A673 (cell line): ENCODE measurements at regions of chr3 and their contacts with region 1.

Region 1: GRCh38 chr3:105518806-105519418 is 152.2 kb downstream of the ALCAM start:
- DNase-seq: peak; percentile 83
- H3K4me3 ChIP-seq: no peak overlapping the region
- H3K27ac ChIP-seq: no peak overlapping the region
- H3K4me1 ChIP-seq: no peaks in the 10 kb centered on the region
- H3K27me3 ChIP-seq: no peaks in the 10 kb centered on the region
- CTCF ChIP-seq: peak; percentile 68

Region 2: DNA sequence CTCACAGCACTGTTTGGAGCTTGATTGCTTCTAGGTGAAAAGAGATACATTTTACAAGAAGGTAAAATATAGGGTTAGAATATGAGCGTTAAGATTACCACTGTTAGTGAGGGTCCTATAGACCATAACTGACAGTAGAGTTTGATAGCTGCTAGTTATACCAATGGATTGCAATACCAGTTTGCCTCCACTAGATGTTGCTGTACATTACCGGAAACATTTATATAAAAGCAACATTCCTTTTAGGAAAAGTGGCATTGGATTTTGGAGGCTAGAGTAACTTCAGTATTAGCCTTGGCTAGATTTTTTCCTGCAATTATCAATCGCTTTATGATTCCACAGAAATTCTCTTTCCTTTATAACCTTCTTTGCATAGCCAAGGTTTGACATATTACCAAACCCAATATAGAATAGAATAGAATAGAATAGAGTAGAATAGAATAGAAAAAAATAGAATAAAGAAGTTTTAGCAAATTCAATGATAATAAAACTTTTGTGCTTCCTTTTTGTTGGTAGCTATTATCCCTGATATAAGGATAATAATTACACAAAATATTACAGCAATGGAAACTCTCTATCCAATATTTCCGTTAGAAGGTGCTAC is 1245.8 kb before region 1 on chr3:
- CTCF ChIA-PET with region 1: no interaction called
- POLR2A ChIA-PET with region 1: no interaction called
- intact Hi-C with region 1: loop called (anchors 5 kb)
- DNase-seq: peak; percentile 57
- H3K4me3 ChIP-seq: no peak overlapping the region
- H3K27ac ChIP-seq: no peak overlapping the region
- H3K4me1 ChIP-seq: no peaks in the 10 kb centered on the region
- H3K27me3 ChIP-seq: no peaks in the 10 kb centered on the region
- CTCF ChIP-seq: peak; percentile 81

Region 3: DNA sequence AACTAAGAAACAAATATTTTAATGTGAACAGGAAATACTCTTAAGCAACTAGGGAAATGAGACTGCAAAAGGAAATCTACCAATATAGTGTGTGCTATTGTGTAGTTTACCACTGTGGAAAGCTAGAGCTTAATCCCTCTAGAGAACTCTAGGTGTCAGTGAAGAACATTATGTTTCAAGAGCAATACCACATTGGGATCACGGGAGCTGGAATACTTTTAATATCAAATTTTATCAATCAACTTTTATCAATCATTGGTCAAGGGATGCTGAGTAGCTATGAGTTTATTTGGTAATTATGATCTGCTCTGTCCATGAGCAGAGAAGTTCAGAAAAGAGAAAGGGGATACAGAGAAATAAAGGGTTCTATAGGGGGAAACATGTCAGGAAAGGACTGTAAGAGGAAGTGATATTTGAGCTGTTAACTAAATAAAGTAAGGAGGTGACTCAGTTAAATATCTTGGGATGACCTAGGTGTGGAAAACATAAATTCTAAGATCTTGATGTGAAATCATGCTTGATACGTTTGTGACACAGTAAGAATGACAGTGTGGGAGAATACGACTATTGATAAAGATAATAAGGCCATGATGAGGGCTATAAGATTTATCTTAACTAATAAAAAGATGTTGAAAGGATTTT is 914.4 kb before region 1 on chr3:
- CTCF ChIA-PET with region 1: no interaction called
- POLR2A ChIA-PET with region 1: no interaction called
- intact Hi-C with region 1: loop called (anchors 10 kb)
- DNase-seq: peak; percentile 37
- H3K4me3 ChIP-seq: no peak overlapping the region
- H3K27ac ChIP-seq: no peak overlapping the region
- H3K4me1 ChIP-seq: no peaks in the 10 kb centered on the region
- H3K27me3 ChIP-seq: no peaks in the 10 kb centered on the region
- CTCF ChIP-seq: peak; percentile 65